ENCODE measurements at regions of chr14 and their contacts with region 1.

Region 1: DNA sequence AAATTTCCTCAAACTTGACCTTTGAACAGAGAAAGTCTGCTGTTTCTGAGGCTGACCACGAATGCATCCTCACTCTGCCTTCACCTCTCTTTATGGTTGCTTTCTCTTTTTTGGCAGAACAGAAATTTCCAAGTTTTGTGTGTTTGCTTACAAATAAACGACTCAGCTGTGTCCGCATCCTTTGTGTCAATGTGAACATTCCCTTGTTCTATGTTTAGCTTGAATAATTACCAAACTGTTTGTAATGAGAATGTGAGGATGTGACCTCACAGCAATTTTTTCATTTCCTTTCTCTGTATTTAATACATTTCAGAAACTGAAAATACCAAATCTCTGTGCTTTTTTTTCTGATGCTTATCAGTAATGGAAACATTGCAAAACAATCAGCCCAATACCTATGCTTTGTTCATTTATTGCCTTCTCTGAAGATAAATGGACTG is 410.9 kb downstream of the EGLN3 start:
- DNase-seq: peak; percentile 76
- H3K4me3 ChIP-seq: no peak overlapping the region
- H3K27ac ChIP-seq: peak overlapping the region; percentile 58
- H3K4me1 ChIP-seq: peaks cover 21% of the 10 kb centered on the region
- H3K27me3 ChIP-seq: no peaks in the 10 kb centered on the region
- CTCF ChIP-seq: no peak
- POLR2A ChIP-seq: no peak

Region 2: GRCh38 chr14:33484264-33484663 is 55.7 kb before region 1 on chr14:
- CTCF ChIA-PET with region 1: no interaction called
- POLR2A ChIA-PET with region 1: no interaction called
- dilution Hi-C with region 1: no loop called
- intact Hi-C with region 1: no loop called
- DNase-seq: peak; percentile 48
- H3K4me3 ChIP-seq: no peak overlapping the region
- H3K27ac ChIP-seq: no peak overlapping the region
- H3K4me1 ChIP-seq: peaks cover 10% of the 10 kb centered on the region
- H3K27me3 ChIP-seq: no peaks in the 10 kb centered on the region
- CTCF ChIP-seq: no peak
- POLR2A ChIP-seq: no peak

Region 3: DNA sequence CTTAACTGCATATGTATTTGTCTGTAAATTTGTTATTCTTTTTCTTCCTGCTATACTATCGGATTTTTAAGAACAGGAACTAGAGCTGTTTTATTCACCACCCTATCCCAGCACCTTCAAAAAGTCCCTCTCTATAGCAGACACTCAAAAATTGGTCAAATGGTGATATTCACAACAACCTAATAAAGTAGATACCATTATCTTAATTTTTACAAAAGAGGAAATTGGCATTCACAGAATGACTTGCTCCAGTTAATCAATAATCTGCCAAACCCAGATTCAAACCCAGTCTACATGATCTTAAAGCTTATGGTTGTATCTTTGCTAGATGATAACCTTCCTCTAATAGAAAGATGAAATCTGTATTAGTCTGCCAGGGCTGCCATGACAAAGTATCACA is 15.7 kb before region 1 on chr14:
- CTCF ChIA-PET with region 1: interaction called, 3 read pairs
- POLR2A ChIA-PET with region 1: no interaction called
- dilution Hi-C with region 1: no loop called
- intact Hi-C with region 1: loop called (anchors 2 kb)
- DNase-seq: no peak
- H3K4me3 ChIP-seq: no peak overlapping the region
- H3K27ac ChIP-seq: no peak overlapping the region
- H3K4me1 ChIP-seq: peaks cover 26% of the 10 kb centered on the region
- H3K27me3 ChIP-seq: no peaks in the 10 kb centered on the region
- CTCF ChIP-seq: no peak
- POLR2A ChIP-seq: no peak

Region 4: DNA sequence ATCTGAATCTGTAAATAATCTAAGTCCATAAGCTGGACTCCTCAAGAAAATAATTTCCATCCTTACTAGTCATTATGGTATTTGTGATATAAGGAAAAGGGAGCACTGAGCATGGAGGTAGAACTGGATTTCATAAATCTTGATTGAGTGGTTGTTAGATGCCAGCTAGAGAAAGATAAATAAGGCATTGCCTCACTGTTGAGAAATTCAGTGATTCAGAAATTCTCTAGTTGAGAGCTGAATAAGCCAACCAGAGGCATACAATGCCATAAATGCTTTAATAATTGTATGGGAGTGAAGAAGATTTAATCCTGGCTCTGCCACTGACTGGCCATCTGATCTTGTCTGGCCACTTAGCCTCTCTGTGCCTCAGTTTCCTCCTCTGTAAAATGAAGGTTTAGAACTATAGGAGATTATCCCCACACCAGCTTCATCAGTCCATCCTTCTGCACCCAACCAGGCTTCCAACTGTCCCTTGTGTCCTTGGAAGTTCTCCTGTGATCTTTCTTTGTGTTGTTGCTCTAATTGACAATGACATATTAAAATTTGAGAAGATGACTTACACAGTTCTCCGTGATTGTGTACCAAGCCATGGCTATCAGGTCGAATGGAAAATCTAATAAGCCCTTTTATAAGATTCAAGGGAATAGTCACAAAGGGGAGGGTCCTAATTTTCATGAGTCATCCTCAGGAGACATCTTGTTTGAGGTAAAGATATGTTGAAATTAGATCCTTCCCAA is 16.6 kb after region 1 on chr14:
- CTCF ChIA-PET with region 1: no interaction called
- POLR2A ChIA-PET with region 1: no interaction called
- dilution Hi-C with region 1: no loop called
- intact Hi-C with region 1: loop called (anchors 2 kb)
- DNase-seq: peak; percentile 37
- H3K4me3 ChIP-seq: no peak overlapping the region
- H3K27ac ChIP-seq: peak overlapping the region; percentile 43
- H3K4me1 ChIP-seq: peaks cover 14% of the 10 kb centered on the region
- H3K27me3 ChIP-seq: no peaks in the 10 kb centered on the region
- CTCF ChIP-seq: no peak
- POLR2A ChIP-seq: no peak

Region 5: DNA sequence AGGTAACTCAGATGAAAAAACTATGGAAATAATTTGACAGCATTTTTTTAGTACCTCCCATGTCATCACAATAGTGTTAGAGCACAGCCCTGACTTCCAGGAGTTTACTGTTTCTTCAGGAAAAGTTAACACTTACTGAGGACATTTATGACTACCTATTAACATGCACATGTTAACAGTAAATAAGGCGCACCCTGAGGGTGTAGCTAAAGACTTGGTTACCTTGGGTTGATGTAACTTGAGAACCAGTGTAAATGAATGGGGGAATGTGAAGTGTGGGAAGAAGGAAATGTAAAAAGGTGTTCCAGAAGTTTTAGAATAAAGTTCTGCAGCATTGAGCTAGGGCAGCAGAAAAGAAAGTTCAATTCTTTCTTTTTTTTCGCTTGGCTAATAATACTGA is 44.8 kb after region 1 on chr14:
- CTCF ChIA-PET with region 1: no interaction called
- POLR2A ChIA-PET with region 1: no interaction called
- dilution Hi-C with region 1: no loop called
- intact Hi-C with region 1: loop called (anchors 1 kb)
- DNase-seq: no peak
- H3K4me3 ChIP-seq: no peak overlapping the region
- H3K27ac ChIP-seq: no peak overlapping the region
- H3K4me1 ChIP-seq: no peaks in the 10 kb centered on the region
- H3K27me3 ChIP-seq: no peaks in the 10 kb centered on the region
- CTCF ChIP-seq: no peak
- POLR2A ChIP-seq: no peak